ENCODE measurements at regions of chr14 and their contacts with region 1.

Region 1: GRCh38 chr14:72893636-72894321 is at the start of gene DPF3:
- DNase-seq: peak; percentile 97 to 99 (median 98)
- ATAC-seq: peak; percentile 99
- H3K4me3 ChIP-seq: peak within 1 kb of the TSS; percentile 95
- H3K27ac ChIP-seq: peak within 1 kb of the TSS; percentile 80
- H3K4me1 ChIP-seq: no peaks in the 10 kb centered on the region
- H3K27me3 ChIP-seq: peaks cover 2% of the 10 kb centered on the region
- total RNA-seq, gene DPF3: 23.5 to 33.0 (median 26.4) TPM

Region 2: GRCh38 chr14:72617391-72618031 is 276.3 kb before region 1 on chr14:
- intact Hi-C with region 1: loop called in 1 of 4 experiments (anchors 10 kb)
- DNase-seq: peak in 2 of 3 donors; percentile 70 to 73
- ATAC-seq: peak; percentile 27
- H3K4me3 ChIP-seq: no peak overlapping the region
- H3K27ac ChIP-seq: peak overlapping the region; percentile 99
- H3K4me1 ChIP-seq: peaks cover 33% of the 10 kb centered on the region
- H3K27me3 ChIP-seq: no peaks in the 10 kb centered on the region

Region 3: GRCh38 chr14:72699852-72700257 is 193.9 kb before region 1 on chr14:
- intact Hi-C with region 1: loop called in 2 of 4 experiments (anchors 5 to 10 kb)
- DNase-seq: peak in 2 of 3 donors; percentile 32 to 71
- ATAC-seq: peak; percentile 67 to 82
- H3K4me3 ChIP-seq: no peak overlapping the region
- H3K27ac ChIP-seq: no peak overlapping the region
- H3K4me1 ChIP-seq: peaks cover 11% of the 10 kb centered on the region
- H3K27me3 ChIP-seq: no peaks in the 10 kb centered on the region

Region 4: DNA sequence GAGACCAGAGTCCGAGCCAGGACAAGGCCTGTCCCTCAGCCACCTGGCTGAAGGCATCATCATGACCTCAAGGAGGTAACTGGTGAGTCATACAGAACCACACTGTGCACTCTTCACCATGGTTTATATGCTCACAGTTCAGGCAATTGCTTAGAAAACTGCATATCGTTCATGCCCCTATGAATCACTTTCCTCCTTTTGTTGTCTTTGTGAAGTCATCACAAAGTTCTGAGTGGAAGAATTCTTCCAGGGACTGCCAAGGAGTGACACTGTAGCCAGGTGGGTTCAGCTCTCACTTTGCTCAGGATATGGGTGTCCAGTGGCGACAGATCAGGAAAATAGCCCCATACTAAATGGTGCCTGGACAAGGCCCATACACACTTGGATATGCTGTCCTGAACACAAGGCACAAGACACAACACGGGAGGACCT is 92.4 kb before region 1 on chr14:
- intact Hi-C with region 1: loop called in 1 of 4 experiments (anchors 10 kb)
- DNase-seq: no peak
- ATAC-seq: peak in 1 of 2 donors; percentile 35
- H3K4me3 ChIP-seq: no peak overlapping the region
- H3K27ac ChIP-seq: peak overlapping the region; percentile 53
- H3K4me1 ChIP-seq: peaks cover 9% of the 10 kb centered on the region
- H3K27me3 ChIP-seq: no peaks in the 10 kb centered on the region

Region 5: GRCh38 chr14:72812292-72812911 is 81.4 kb before region 1 on chr14:
- intact Hi-C with region 1: loop called in 2 of 4 experiments (anchors 10 kb)
- DNase-seq: peak; percentile 61 to 84 (median 78)
- ATAC-seq: peak; percentile 91 to 92
- H3K4me3 ChIP-seq: no peak overlapping the region
- H3K27ac ChIP-seq: peak overlapping the region; percentile 86
- H3K4me1 ChIP-seq: peaks cover 4% of the 10 kb centered on the region
- H3K27me3 ChIP-seq: no peaks in the 10 kb centered on the region

Region 6: GRCh38 chr14:72975776-72976175 is 82.0 kb after region 1 on chr14:
- intact Hi-C with region 1: no loop called
- DNase-seq: no peak
- ATAC-seq: no peak
- H3K4me3 ChIP-seq: no peak overlapping the region
- H3K27ac ChIP-seq: no peak overlapping the region
- H3K4me1 ChIP-seq: no peaks in the 10 kb centered on the region
- H3K27me3 ChIP-seq: no peaks in the 10 kb centered on the region

Measured in right cardiac atrium (tissue), 5 donors.